Endothelial cell of umbilical vein (primary cell): ENCODE measurements at regions of chr15 and their contacts with region 1.

Region 1: GRCh38 chr15:57611938-57612337 is 20.2 kb downstream of the MYZAP start:
- DNase-seq: peak; percentile 73
- H3K4me3 ChIP-seq: no peak overlapping the region
- H3K27ac ChIP-seq: no peak overlapping the region
- H3K4me1 ChIP-seq: peaks cover 25% of the 10 kb centered on the region
- H3K27me3 ChIP-seq: no peaks in the 10 kb centered on the region
- CTCF ChIP-seq: peak in 1 of 2 donors; percentile 40
- POLR2A ChIP-seq: no peak

Region 2: DNA sequence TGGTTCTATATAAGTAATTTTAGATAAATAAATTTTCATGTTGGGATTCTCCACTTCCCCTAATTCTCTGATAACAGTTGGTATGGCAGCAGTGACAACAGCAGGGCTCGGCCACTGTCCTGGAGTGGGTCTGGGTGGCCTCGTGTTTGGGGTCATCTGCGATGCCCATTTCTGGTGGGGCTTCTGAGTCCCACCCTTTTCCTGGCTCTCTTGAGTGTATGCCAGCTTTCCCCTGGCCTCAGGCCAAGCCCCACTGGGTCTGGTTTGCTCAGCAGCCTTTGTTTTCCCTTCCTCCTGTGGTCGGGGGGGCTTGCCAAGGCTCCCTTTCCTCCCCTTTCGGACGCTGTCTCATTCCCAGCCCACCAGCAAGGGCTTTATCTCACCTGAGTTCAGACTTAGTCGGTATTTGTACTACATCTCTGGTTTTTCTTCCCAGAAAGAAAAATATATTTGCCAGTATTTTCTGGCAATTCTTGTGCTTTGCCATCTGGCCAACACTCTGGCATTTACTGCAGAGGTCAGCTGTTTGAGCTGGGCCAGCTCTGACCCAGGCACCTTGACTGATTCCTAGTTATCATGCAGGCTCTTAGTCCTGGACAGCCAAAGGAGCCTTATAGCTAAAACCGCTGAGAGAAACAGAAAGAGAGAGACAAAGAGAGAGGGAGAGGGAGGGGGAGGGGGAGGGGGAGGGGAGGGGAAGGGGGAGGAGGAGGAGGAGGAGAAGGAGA is 14.9 kb after region 1 on chr15:
- CTCF ChIA-PET with region 1: interaction called, 15 read pairs
- POLR2A ChIA-PET with region 1: no interaction called
- dilution Hi-C with region 1: no loop called
- intact Hi-C with region 1: no loop called
- DNase-seq: peak; percentile 75
- H3K4me3 ChIP-seq: no peak overlapping the region
- H3K27ac ChIP-seq: no peak overlapping the region
- H3K4me1 ChIP-seq: peaks cover 14% of the 10 kb centered on the region
- H3K27me3 ChIP-seq: no peaks in the 10 kb centered on the region
- CTCF ChIP-seq: no peak
- POLR2A ChIP-seq: no peak

Region 3: GRCh38 chr15:58933281-58934113 is 1321.6 kb after region 1 on chr15 and contains the start of gene SLTM:
- CTCF ChIA-PET with region 1: no interaction called
- POLR2A ChIA-PET with region 1: no interaction called
- dilution Hi-C with region 1: no loop called
- intact Hi-C with region 1: no loop called
- DNase-seq: peak; percentile 97
- H3K4me3 ChIP-seq: peak within 1 kb of the TSS; percentile 54 to 97 (median 95)
- H3K27ac ChIP-seq: peak within 1 kb of the TSS; percentile 93
- H3K4me1 ChIP-seq: peaks cover 19% of the 10 kb centered on the region
- H3K27me3 ChIP-seq: no peaks in the 10 kb centered on the region
- CTCF ChIP-seq: peak in 1 of 2 donors; percentile 31
- POLR2A ChIP-seq: peak; percentile 99
- total RNA-seq, gene SLTM: 80.9 and 93.0 TPM in 2 replicates